ENCODE measurements at regions of chr11 and their contacts with region 1.

Region 1: DNA sequence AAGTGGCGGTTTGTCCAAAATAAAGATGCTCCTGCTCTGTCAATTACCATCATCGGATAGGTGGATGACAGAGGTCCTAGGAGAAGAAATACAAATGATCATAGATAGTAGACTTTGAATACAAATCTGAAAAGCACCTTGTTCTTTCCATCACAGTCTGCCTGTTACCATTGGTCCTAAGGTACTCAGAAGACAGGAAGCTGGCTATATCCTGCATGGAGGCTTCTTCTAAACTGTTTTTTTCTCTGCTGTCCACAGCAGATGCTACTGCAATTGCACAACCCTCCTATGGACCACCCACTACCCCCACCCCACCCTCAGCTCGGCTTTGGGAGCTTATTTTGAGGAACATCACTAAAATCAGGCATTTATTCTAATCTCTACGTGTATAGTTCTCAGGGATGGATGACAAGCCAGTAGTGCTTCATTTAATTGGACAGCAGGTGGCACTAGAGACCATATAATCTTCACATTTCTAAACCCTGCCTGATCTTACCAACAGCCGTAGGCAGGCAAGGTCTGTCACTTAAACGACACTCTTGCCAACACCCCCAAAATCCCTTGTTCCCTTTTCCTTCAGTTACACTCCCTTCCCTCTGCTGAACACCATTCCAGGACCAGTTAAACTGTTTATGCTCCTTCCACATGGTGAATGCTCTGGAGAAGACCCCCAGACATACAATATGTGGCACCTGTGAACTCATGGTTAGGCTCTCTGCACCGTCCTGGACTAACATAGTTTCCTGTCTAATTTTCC is 6.6 kb upstream of the PTS start:
- DNase-seq: peak; percentile 80
- H3K4me3 ChIP-seq: no peak overlapping the region
- H3K27ac ChIP-seq: no peak overlapping the region
- H3K4me1 ChIP-seq: peaks cover 11% of the 10 kb centered on the region
- H3K27me3 ChIP-seq: no peaks in the 10 kb centered on the region
- CTCF ChIP-seq: peak; percentile 57 to 60
- POLR2A ChIP-seq: no peak

Region 2: DNA sequence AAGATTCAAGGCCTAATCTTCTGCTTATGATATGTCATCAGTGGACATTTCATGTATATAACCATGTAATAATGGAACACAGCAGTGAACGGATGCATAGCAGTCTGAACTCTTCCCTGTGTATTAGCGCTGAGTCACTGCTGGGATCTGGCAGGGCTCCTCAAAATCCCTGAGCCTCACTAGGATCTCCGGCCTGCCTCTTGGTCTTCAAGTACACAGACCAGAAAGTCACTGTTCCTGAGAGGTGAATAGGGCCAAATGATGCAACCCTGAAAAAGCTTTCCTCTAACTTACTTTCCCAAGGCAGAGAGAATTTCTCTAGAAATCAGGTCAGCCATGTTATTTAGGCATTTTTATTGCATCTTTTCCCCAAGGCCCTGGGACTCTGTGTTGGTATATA is 875.6 kb before region 1 on chr11:
- CTCF ChIA-PET with region 1: no interaction called
- POLR2A ChIA-PET with region 1: no interaction called
- dilution Hi-C with region 1: no loop called
- intact Hi-C with region 1: no loop called
- DNase-seq: no peak
- H3K4me3 ChIP-seq: no peak overlapping the region
- H3K27ac ChIP-seq: no peak overlapping the region
- H3K4me1 ChIP-seq: no peaks in the 10 kb centered on the region
- H3K27me3 ChIP-seq: no peaks in the 10 kb centered on the region
- CTCF ChIP-seq: no peak
- POLR2A ChIP-seq: no peak

Region 3: GRCh38 chr11:112453601-112454577 is 234.2 kb after region 1 on chr11:
- CTCF ChIA-PET with region 1: interaction called, 3 read pairs
- POLR2A ChIA-PET with region 1: no interaction called
- dilution Hi-C with region 1: no loop called
- intact Hi-C with region 1: loop called (anchors 1 kb)
- DNase-seq: peak; percentile 24
- H3K4me3 ChIP-seq: no peak overlapping the region
- H3K27ac ChIP-seq: no peak overlapping the region
- H3K4me1 ChIP-seq: no peaks in the 10 kb centered on the region
- H3K27me3 ChIP-seq: no peaks in the 10 kb centered on the region
- CTCF ChIP-seq: peak; percentile 26 to 43
- POLR2A ChIP-seq: no peak

Region 4: DNA sequence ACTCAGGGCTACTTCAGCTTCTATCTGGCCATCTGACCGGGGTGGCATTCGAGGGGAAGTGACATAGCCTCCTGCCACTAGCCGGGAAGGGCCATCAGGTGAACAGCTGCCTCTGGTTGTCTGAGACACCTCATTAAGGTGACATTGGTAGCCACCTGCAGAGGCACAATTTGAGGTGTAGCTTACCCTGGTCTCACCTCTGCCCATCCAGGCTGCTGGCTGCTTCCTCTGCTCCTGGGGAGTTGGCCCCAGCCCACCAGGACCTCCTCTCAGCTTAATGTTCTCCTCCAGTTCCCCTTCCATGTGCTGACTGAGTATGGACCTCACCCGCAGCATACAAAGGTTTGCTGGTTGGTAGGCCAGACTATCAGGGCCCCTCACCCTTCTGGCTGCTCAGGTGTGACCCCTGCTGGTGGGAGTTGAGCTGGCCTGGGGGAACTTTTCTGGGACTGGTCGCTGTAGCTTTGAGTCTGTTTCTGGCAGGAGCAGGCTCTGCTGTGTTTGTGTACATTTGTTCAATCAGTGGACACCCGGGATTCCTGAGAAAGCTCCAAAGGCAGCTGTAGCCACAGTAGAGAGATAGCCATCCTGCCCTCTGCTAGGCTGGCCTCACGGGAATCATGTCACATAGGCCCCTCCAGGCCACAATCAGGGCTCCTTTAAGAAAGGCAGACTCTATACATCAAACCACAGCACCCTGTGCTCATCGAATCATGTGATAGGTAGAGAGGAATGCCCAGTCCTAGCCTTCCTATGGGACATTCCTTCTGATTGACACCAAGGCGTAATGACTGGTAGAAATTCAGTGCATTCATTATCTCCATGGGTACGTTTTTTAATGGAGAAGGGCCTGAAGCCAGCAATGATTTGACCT is 336.1 kb after region 1 on chr11:
- CTCF ChIA-PET with region 1: interaction called, 10 read pairs
- POLR2A ChIA-PET with region 1: no interaction called
- dilution Hi-C with region 1: no loop called
- intact Hi-C with region 1: loop called (anchors 1 kb)
- DNase-seq: peak; percentile 43
- H3K4me3 ChIP-seq: no peak overlapping the region
- H3K27ac ChIP-seq: no peak overlapping the region
- H3K4me1 ChIP-seq: no peaks in the 10 kb centered on the region
- H3K27me3 ChIP-seq: no peaks in the 10 kb centered on the region
- CTCF ChIP-seq: peak; percentile 69 to 86
- POLR2A ChIP-seq: no peak

Region 5: GRCh38 chr11:113289431-113290187 is 1070.0 kb after region 1 on chr11:
- CTCF ChIA-PET with region 1: interaction called, 16 read pairs
- POLR2A ChIA-PET with region 1: no interaction called
- dilution Hi-C with region 1: no loop called
- intact Hi-C with region 1: loop called (anchors 1 kb)
- DNase-seq: peak; percentile 59
- H3K4me3 ChIP-seq: no peak overlapping the region
- H3K27ac ChIP-seq: no peak overlapping the region
- H3K4me1 ChIP-seq: no peaks in the 10 kb centered on the region
- H3K27me3 ChIP-seq: no peaks in the 10 kb centered on the region
- CTCF ChIP-seq: peak; percentile 76 to 92
- POLR2A ChIP-seq: no peak

Region 6: DNA sequence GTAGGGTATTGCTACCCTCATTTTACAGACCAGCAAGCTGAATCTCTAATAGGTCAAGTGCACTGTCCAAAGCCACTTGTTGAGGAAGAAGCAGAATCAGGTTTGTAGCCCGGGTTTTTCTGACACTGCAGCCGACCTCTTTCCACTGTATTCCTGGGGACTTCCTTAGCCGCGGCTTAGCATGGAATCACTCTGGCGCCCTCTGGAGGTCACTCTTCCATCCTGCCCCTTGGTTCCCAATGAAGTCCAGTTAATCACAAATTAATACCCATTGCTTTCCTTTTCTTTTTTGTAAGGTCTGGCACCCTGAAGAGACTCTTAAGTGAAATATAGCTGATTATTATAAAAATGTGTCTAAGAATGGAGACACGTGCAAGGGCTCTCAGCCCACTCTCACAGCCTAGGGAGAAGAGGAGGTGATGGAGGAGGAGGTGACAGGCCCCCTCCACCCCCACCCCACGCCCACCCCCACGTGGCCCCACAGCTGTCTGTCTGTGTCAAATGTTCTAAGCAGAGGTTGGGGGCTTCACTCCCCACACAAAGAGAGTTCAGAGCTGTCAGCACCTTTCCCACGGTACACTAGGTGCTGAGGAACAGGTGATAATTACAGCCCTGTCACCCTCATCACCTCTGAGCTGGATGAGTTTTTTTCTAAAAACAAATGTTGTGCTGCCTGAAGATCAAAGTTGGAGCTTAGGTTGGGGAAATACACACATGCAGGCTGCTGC is 1313.2 kb after region 1 on chr11:
- CTCF ChIA-PET with region 1: no interaction called
- POLR2A ChIA-PET with region 1: no interaction called
- dilution Hi-C with region 1: no loop called
- intact Hi-C with region 1: loop called (anchors 1 kb)
- DNase-seq: peak; percentile 64
- H3K4me3 ChIP-seq: no peak overlapping the region
- H3K27ac ChIP-seq: no peak overlapping the region
- H3K4me1 ChIP-seq: no peaks in the 10 kb centered on the region
- H3K27me3 ChIP-seq: no peaks in the 10 kb centered on the region
- CTCF ChIP-seq: peak; percentile 75 to 86
- POLR2A ChIP-seq: no peak